GM12878 (cell line): ENCODE measurements at regions of chr19 and their contacts with region 1.

Region 1: DNA sequence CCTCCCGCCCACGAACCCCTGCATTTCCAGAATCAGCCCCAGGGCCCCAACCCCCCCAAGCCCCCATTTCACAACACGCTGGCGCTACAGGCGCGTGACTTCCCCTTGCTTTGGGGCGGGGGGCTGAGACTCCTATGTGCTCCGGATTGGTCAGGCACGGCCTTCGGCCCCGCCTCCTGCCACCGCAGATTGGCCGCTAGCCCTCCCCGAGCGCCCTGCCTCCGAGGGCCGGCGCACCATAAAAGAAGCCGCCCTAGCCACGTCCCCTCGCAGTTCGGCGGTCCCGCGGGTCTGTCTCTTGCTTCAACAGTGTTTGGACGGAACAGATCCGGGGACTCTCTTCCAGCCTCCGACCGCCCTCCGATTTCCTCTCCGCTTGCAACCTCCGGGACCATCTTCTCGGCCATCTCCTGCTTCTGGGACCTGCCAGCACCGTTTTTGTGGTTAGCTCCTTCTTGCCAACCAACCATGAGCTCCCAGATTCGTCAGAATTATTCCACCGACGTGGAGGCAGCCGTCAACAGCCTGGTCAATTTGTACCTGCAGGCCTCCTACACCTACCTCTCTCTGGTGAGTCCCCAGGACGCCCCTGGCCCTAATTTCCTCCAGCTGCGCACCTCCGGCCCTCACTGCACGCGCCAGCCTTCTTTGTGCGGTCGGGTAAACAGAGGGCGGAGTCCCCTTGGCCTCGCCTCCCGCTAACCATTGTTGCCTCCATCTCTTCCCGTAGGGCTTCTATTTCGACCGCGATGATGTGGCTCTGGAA is at the start of gene FTL:
- DNase-seq: peak; percentile 82
- ATAC-seq: peak; percentile 79
- H3K4me3 ChIP-seq: peak within 1 kb of the TSS; percentile 93
- H3K27ac ChIP-seq: peak within 1 kb of the TSS; percentile 84
- H3K4me1 ChIP-seq: peaks cover 41% of the 10 kb centered on the region
- H3K27me3 ChIP-seq: no peaks in the 10 kb centered on the region
- CTCF ChIP-seq: no peak
- EP300 ChIP-seq: no peak
- POLR2A ChIP-seq: peak; percentile 95
- RAD21 ChIP-seq: no peak
- polyA plus RNA-seq, gene FTL: 5,502 to 8,913 TPM

Region 2: DNA sequence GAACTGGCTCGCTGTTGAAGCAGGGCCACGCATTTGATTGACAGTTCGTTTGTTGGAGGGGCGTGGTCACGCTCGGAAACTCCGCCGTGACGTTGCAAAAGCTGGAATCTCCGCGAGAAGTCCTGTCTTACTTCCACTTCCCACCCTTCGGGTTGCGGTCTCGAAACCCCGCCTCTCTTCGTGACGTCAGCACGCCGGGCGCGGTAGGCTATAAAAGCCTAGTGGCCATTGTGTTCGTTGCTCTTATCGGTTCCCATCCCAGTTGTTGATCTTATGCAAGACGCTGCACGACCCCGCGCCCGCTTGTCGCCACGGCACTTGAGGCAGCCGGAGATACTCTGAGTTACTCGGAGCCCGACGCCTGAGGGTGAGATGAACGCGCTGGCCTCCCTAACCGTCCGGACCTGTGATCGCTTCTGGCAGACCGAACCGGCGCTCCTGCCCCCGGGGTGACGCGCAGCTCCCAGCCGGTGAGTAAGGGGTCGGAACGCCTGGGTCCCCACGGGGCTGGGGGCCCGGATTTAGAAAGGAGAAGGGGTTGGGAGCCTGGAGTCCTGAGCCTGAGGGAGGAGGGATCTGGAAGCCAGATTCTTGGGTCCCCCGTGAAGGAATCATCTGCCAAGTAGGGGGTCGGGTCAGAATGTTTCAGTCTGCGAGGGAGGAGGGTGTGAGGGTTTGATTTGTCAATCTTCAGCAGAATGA is 92.9 kb before region 1 on chr19 and contains the start of gene PPP1R15A:
- CTCF ChIA-PET with region 1: interaction called, 12 read pairs
- POLR2A ChIA-PET with region 1: interaction called, 64 read pairs
- RAD21 ChIA-PET with region 1: interaction called, 26 read pairs
- SMC1A ChIA-PET with region 1: interaction called, 28 read pairs
- in situ Hi-C with region 1: no loop called
- intact Hi-C with region 1: loop called (anchors 1 kb)
- DNase-seq: peak; percentile 97
- ATAC-seq: peak; percentile 39
- H3K4me3 ChIP-seq: peak within 1 kb of the TSS; percentile 100
- H3K27ac ChIP-seq: peak within 1 kb of the TSS; percentile 94
- H3K4me1 ChIP-seq: peaks cover 20% of the 10 kb centered on the region
- H3K27me3 ChIP-seq: no peaks in the 10 kb centered on the region
- CTCF ChIP-seq: no peak; a peak in 1 of 6 replicates
- EP300 ChIP-seq: peak in 1 of 2 experiments; percentile 41; a peak in 1 of 4 replicates
- POLR2A ChIP-seq: peak; percentile 100
- RAD21 ChIP-seq: no peak
- polyA plus RNA-seq, gene PPP1R15A: 0.68 to 0.90 TPM

Region 3: GRCh38 chr19:48913114-48913889 is 51.9 kb before region 1 on chr19:
- CTCF ChIA-PET with region 1: interaction called, 5 read pairs
- POLR2A ChIA-PET with region 1: interaction called, 10 read pairs
- RAD21 ChIA-PET with region 1: interaction called, 3 read pairs
- SMC1A ChIA-PET with region 1: no interaction called
- in situ Hi-C with region 1: no loop called
- intact Hi-C with region 1: no loop called
- DNase-seq: no peak
- ATAC-seq: peak; percentile 73
- H3K4me3 ChIP-seq: no peak overlapping the region
- H3K27ac ChIP-seq: no peak overlapping the region
- H3K4me1 ChIP-seq: peaks cover 13% of the 10 kb centered on the region
- H3K27me3 ChIP-seq: no peaks in the 10 kb centered on the region
- CTCF ChIP-seq: no peak
- EP300 ChIP-seq: no peak
- POLR2A ChIP-seq: no peak
- RAD21 ChIP-seq: no peak

Region 4: GRCh38 chr19:48975947-48976847 is 11.0 kb after region 1 on chr19:
- CTCF ChIA-PET with region 1: interaction called, 5 read pairs
- POLR2A ChIA-PET with region 1: interaction called, 15 read pairs
- RAD21 ChIA-PET with region 1: interaction called, 3 read pairs
- SMC1A ChIA-PET with region 1: interaction called, 9 read pairs
- in situ Hi-C with region 1: no loop called
- intact Hi-C with region 1: no loop called
- DNase-seq: no peak
- ATAC-seq: peak; percentile 69
- H3K4me3 ChIP-seq: no peak overlapping the region
- H3K27ac ChIP-seq: no peak overlapping the region
- H3K4me1 ChIP-seq: peaks cover 4% of the 10 kb centered on the region
- H3K27me3 ChIP-seq: no peaks in the 10 kb centered on the region
- CTCF ChIP-seq: no peak
- EP300 ChIP-seq: no peak
- POLR2A ChIP-seq: no peak
- RAD21 ChIP-seq: no peak

Region 5: GRCh38 chr19:49056010-49056901 is 91.0 kb after region 1 on chr19:
- CTCF ChIA-PET with region 1: no interaction called
- POLR2A ChIA-PET with region 1: no interaction called
- RAD21 ChIA-PET with region 1: no interaction called
- SMC1A ChIA-PET with region 1: no interaction called
- in situ Hi-C with region 1: no loop called
- intact Hi-C with region 1: no loop called
- DNase-seq: no peak
- ATAC-seq: peak; percentile 96
- H3K4me3 ChIP-seq: peak overlapping the region; percentile 51; the same call in 1 of the 2 replicates
- H3K27ac ChIP-seq: no peak overlapping the region
- H3K4me1 ChIP-seq: no peaks in the 10 kb centered on the region
- H3K27me3 ChIP-seq: peaks cover 3 to 16% of the 10 kb centered on the region in 2 experiments; a peak in 3 of 4 replicates
- CTCF ChIP-seq: peak in 2 of 3 experiments; percentile 14 to 20; a peak in 2 of 6 replicates
- EP300 ChIP-seq: no peak
- POLR2A ChIP-seq: no peak
- RAD21 ChIP-seq: no peak

Region 6: DNA sequence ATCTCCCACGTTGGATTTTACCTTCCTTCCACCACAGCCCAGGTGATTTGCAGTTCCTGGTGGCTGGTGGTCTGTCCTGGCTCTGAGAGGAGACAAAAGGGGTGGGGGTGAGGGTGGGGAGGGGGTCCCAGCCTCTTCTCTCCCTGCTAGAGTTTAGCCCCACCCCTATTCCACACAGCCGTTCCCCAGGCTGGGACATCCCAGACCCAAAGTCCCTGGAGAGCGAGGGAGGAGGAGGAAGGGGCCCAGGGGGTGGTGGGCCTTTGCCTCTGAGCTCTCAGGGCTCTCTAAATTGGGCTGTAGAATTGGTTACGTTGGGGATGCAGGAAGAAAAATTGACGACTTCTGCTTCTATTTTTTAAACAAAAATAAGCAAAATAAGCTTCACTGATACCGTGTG is 277.9 kb after region 1 on chr19:
- CTCF ChIA-PET with region 1: no interaction called
- POLR2A ChIA-PET with region 1: no interaction called
- RAD21 ChIA-PET with region 1: no interaction called
- SMC1A ChIA-PET with region 1: no interaction called
- in situ Hi-C with region 1: no loop called
- intact Hi-C with region 1: no loop called
- DNase-seq: no peak
- ATAC-seq: no peak
- H3K4me3 ChIP-seq: no peak overlapping the region
- H3K27ac ChIP-seq: no peak overlapping the region
- H3K4me1 ChIP-seq: no peaks in the 10 kb centered on the region
- H3K27me3 ChIP-seq: no peaks in the 10 kb centered on the region
- CTCF ChIP-seq: no peak
- EP300 ChIP-seq: no peak
- POLR2A ChIP-seq: no peak
- RAD21 ChIP-seq: no peak